SK-N-SH (cell line): ENCODE measurements at regions of chr15 and their contacts with region 1.

Region 1: GRCh38 chr15:65330934-65331645 is 26.6 kb downstream of the RNU5B-1 start:
- DNase-seq: peak; percentile 17
- H3K4me3 ChIP-seq: no peak overlapping the region
- H3K27ac ChIP-seq: no peak overlapping the region
- H3K4me1 ChIP-seq: peaks cover 0 to 25% of the 10 kb centered on the region in 2 experiments; a peak in 1 of 4 replicates
- H3K27me3 ChIP-seq: no peaks in the 10 kb centered on the region
- CTCF ChIP-seq: no peak
- EP300 ChIP-seq: no peak
- RAD21 ChIP-seq: no peak

Region 2: DNA sequence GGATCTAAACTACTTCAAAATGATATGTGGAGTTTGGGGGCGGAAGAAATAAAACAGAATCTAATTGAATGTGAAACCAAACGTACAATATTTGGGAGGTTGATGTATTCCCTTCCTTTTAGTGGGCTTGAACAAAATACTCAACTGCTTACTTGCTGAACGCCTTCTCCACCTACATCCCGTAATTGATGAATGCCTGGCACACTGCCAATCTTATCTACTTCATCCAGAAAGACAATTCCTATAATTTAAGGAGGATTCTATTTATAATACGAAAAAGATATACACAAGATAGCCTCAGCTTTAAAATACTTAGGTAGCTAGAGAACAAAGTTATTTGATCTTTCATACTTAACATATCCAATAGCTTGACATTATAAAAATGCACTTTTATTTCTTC is 174.4 kb before region 1 on chr15:
- CTCF ChIA-PET with region 1: no interaction called
- POLR2A ChIA-PET with region 1: no interaction called
- DNase-seq: no peak
- H3K4me3 ChIP-seq: no peak overlapping the region
- H3K27ac ChIP-seq: no peak overlapping the region
- H3K4me1 ChIP-seq: no peaks in the 10 kb centered on the region
- H3K27me3 ChIP-seq: no peaks in the 10 kb centered on the region
- CTCF ChIP-seq: no peak
- EP300 ChIP-seq: no peak
- RAD21 ChIP-seq: no peak

Region 3: GRCh38 chr15:65249641-65250040 is 81.4 kb before region 1 on chr15:
- CTCF ChIA-PET with region 1: no interaction called
- POLR2A ChIA-PET with region 1: no interaction called
- DNase-seq: no peak
- H3K4me3 ChIP-seq: no peak overlapping the region
- H3K27ac ChIP-seq: no peak overlapping the region
- H3K4me1 ChIP-seq: peaks cover 0 to 2% of the 10 kb centered on the region in 2 experiments; a peak in 1 of 4 replicates
- H3K27me3 ChIP-seq: no peaks in the 10 kb centered on the region
- CTCF ChIP-seq: no peak
- EP300 ChIP-seq: no peak
- RAD21 ChIP-seq: no peak

Region 4: GRCh38 chr15:65318870-65319356 is 12.2 kb before region 1 on chr15:
- CTCF ChIA-PET with region 1: interaction called, 15 read pairs
- POLR2A ChIA-PET with region 1: no interaction called
- DNase-seq: peak; percentile 86
- H3K4me3 ChIP-seq: no peak overlapping the region; a peak in 1 of 4 replicates
- H3K27ac ChIP-seq: no peak overlapping the region
- H3K4me1 ChIP-seq: peaks cover 0 to 7% of the 10 kb centered on the region in 2 experiments; a peak in 1 of 4 replicates
- H3K27me3 ChIP-seq: peaks cover 12% of the 10 kb centered on the region; the same call in 1 of the 2 replicates
- CTCF ChIP-seq: peak; percentile 86
- EP300 ChIP-seq: no peak
- RAD21 ChIP-seq: peak; percentile 99